ENCODE measurements at regions of chr12 and their contacts with region 1.

Region 1: DNA sequence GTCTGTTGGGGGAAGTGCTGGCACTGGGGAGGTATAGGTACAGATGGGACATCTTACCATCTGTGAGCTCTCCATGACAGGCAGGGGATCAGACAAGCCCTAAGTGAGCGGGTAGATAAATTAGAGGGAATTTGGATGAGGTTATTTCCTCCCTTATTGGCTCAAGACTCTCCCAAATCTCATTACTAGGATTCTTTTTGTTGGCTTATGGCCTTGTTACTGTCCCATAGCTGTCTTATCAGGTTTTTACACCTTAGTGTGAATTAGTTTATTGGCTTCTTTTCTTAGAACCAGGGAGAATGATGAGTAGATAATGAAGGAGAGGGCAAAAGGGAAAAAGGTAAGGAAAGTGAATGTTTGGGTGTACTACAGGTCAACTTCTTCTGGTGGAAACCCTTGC is 191.1 kb upstream of the PRICKLE1 start:
- DNase-seq: no peak
- ATAC-seq: peak; percentile 37

Region 2: DNA sequence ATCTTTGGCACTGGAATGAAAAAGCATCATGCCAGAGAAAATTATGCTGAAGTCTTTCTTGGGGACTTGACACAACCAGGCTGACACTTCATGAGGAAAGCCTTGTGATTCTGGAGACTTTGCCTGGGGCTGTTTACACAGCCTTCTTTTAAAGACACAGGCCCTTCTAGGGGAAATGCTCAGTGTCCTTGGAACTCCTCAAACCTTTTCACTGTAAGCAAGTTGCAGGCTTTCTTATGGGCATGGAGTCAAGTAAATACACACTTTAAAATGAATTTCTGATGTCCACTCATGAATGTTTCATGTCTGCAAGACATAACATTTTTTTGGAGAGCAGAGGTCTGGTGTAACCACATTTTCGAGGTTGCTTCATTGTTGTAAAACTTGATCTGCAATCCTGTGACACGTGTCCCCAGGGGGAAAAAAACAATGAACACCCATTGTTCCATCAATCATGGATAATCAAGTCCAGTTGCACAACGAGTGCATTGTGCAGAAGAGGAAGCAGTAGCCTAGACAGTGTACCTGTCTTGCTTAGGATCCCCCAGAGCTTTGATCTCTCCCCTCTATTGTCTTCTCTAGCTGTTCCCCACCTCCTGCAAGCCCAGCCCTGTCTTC is 36.0 kb before region 1 on chr12:
- intact Hi-C with region 1: loop called (anchors 5 kb)
- DNase-seq: no peak
- ATAC-seq: peak; percentile 49

Region 3: GRCh38 chr12:43054085-43054484 is 273.4 kb after region 1 on chr12:
- intact Hi-C with region 1: no loop called
- DNase-seq: no peak
- ATAC-seq: no peak

Measured in Right ventricle myocardium inferior (tissue), 1 donor.